ENCODE measurements at regions of chr1 and their contacts with region 1.

Region 1: GRCh38 chr1:209607102-209607794 is 23.7 kb downstream of the CAMK1G start:
- DNase-seq: peak; percentile 92
- H3K4me3 Mint-ChIP-seq: no peak overlapping the region
- H3K27ac Mint-ChIP-seq: peak overlapping the region; percentile 81
- H3K4me1 Mint-ChIP-seq: no peaks in the 10 kb centered on the region
- H3K27me3 Mint-ChIP-seq: no peaks in the 10 kb centered on the region
- CTCF ChIP-seq: no peak

Region 2: DNA sequence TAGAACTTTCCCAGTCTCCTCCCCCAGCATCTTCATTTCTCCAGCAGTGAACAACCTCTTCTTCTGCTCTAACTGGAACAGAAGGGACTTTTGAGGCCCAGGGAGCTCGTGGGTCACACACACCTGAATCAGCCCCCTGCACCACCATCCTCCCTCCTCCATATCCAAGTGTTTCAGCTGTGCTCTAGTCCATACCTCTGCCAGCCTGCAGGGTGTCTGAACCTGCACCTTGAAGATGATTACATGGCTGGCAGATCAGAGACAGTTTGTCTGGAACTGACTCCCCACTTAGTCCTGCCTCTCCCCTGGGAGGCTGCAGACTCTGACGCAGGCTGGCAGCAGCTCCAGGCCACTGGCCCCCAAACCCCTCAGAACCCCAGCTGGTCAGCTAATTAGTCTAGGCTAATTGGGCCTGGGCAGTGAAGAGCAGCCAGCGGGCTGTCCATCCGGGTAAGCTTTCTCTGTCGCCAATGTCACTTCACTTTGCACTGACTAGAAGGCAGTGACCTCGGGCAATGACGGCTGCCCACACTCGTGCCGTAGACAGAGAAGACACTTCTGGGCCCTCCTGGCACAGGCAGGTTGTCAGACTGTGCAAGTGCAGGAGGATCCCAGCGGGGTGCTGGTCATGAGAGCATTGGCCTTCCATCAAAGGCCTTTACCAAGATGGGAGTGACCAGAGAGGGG is 11.5 kb before region 1 on chr1:
- CTCF ChIA-PET with region 1: interaction called, 193 read pairs
- POLR2A ChIA-PET with region 1: interaction called, 6 read pairs
- intact Hi-C with region 1: no loop called
- DNase-seq: no peak
- H3K4me3 Mint-ChIP-seq: no peak overlapping the region
- H3K27ac Mint-ChIP-seq: no peak overlapping the region
- H3K4me1 Mint-ChIP-seq: peaks cover 6% of the 10 kb centered on the region
- H3K27me3 Mint-ChIP-seq: no peaks in the 10 kb centered on the region
- CTCF ChIP-seq: peak; percentile 6

Region 3: GRCh38 chr1:209618756-209619420 is 11.6 kb after region 1 on chr1:
- CTCF ChIA-PET with region 1: interaction called, 140 read pairs
- POLR2A ChIA-PET with region 1: interaction called, 43 read pairs
- intact Hi-C with region 1: no loop called
- DNase-seq: peak; percentile 63
- H3K4me3 Mint-ChIP-seq: no peak overlapping the region
- H3K27ac Mint-ChIP-seq: peak overlapping the region; percentile 24
- H3K4me1 Mint-ChIP-seq: peaks cover 43% of the 10 kb centered on the region
- H3K27me3 Mint-ChIP-seq: no peaks in the 10 kb centered on the region
- CTCF ChIP-seq: no peak